ENCODE measurements at regions of chr2 and their contacts with region 1.

Region 1: DNA sequence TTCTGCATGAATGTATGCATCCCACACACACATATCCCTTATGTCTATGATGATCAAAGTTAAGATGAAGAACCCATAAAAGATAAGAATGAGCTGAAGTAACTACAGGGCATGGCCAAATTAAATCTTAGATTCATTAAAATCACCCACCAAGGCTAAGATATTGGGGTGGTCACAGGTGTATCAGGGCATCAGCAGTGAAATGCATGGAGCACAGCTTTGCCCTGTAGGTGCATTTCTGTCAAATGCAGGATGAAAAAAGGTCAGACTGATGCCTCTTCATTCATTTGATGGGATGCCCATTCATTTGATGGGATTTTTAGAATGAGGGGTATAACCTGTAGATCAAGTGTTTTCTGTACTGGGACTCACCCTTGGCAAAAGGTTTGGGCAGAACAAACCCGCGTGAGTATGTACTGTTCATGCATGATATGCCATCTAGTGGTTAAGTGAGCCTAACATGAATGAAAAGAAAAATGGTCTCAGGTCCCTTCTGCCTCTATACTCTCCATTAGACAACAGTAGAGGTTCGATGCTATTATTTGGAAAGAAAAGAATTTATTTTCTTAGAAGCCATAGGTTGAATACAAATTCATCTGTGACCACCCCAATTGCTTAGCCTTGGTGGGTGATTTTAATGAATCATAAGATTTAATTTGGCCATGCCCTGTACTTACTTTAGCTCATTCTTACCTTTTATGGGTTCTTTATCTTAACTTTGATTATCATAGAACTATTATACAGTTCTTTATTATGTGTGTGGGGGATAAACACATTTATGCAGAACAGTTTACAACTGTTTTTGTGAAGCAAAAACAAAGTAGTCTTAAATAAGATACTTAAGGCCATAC is 43.2 kb upstream of the NOSTRIN start:
- DNase-seq: peak in 7 of 9 donors; percentile 12 to 53 (median 45)
- ATAC-seq: peak; percentile 87
- H3K4me3 ChIP-seq: no peak overlapping the region
- H3K4me3 Mint-ChIP-seq: no peak overlapping the region
- H3K27ac ChIP-seq: no peak overlapping the region
- H3K27ac Mint-ChIP-seq: peak overlapping the region in 1 of 9 donors; percentile 14
- H3K4me1 ChIP-seq: peaks cover 21 to 42% of the 10 kb centered on the region in 2 donors
- H3K4me1 Mint-ChIP-seq: peaks cover 21 to 52% (median 48%) of the 10 kb centered on the region in 7 donors
- H3K27me3 ChIP-seq: no peaks in the 10 kb centered on the region
- H3K27me3 Mint-ChIP-seq: no peaks in the 10 kb centered on the region

Region 2: GRCh38 chr2:168687314-168687713 is 71.9 kb before region 1 on chr2:
- CTCF ChIA-PET with region 1: interaction called, 4 read pairs
- POLR2A ChIA-PET with region 1: no interaction called
- intact Hi-C with region 1: loop called in 1 of 2 experiments (anchors 1 kb)
- DNase-seq: peak in 7 of 9 donors; percentile 12 to 50 (median 31)
- ATAC-seq: no peak
- H3K4me3 ChIP-seq: no peak overlapping the region
- H3K4me3 Mint-ChIP-seq: no peak overlapping the region
- H3K27ac ChIP-seq: no peak overlapping the region
- H3K27ac Mint-ChIP-seq: no peak overlapping the region
- H3K4me1 ChIP-seq: no peaks in the 10 kb centered on the region
- H3K4me1 Mint-ChIP-seq: peaks cover 3 to 28% (median 9%) of the 10 kb centered on the region in 7 donors
- H3K27me3 ChIP-seq: no peaks in the 10 kb centered on the region
- H3K27me3 Mint-ChIP-seq: no peaks in the 10 kb centered on the region

Region 3: GRCh38 chr2:168705534-168706470 is 53.4 kb before region 1 on chr2:
- CTCF ChIA-PET with region 1: interaction called, 4 read pairs
- POLR2A ChIA-PET with region 1: no interaction called
- intact Hi-C with region 1: loop called in 1 of 2 experiments (anchors 1 kb)
- DNase-seq: peak in 4 of 9 donors; percentile 4 to 31 (median 16)
- ATAC-seq: no peak
- H3K4me3 ChIP-seq: no peak overlapping the region
- H3K4me3 Mint-ChIP-seq: no peak overlapping the region
- H3K27ac ChIP-seq: no peak overlapping the region
- H3K27ac Mint-ChIP-seq: peak overlapping the region in 2 of 9 donors; percentile 3 to 42
- H3K4me1 ChIP-seq: no peaks in the 10 kb centered on the region
- H3K4me1 Mint-ChIP-seq: peaks cover 0 to 20% (median 13%) of the 10 kb centered on the region in 7 donors
- H3K27me3 ChIP-seq: no peaks in the 10 kb centered on the region
- H3K27me3 Mint-ChIP-seq: no peaks in the 10 kb centered on the region

Region 4: GRCh38 chr2:168712049-168712448 is 47.1 kb before region 1 on chr2:
- CTCF ChIA-PET with region 1: no interaction called
- POLR2A ChIA-PET with region 1: no interaction called
- intact Hi-C with region 1: loop called in 1 of 2 experiments (anchors 2 kb)
- DNase-seq: no peak
- ATAC-seq: peak; percentile 29
- H3K4me3 ChIP-seq: no peak overlapping the region
- H3K4me3 Mint-ChIP-seq: no peak overlapping the region
- H3K27ac ChIP-seq: no peak overlapping the region
- H3K27ac Mint-ChIP-seq: peak overlapping the region in 2 of 9 donors; percentile 52 to 61
- H3K4me1 ChIP-seq: no peaks in the 10 kb centered on the region
- H3K4me1 Mint-ChIP-seq: peaks cover under 1 to 28% (median 17%) of the 10 kb centered on the region in 7 donors
- H3K27me3 ChIP-seq: no peaks in the 10 kb centered on the region
- H3K27me3 Mint-ChIP-seq: no peaks in the 10 kb centered on the region

Region 5: DNA sequence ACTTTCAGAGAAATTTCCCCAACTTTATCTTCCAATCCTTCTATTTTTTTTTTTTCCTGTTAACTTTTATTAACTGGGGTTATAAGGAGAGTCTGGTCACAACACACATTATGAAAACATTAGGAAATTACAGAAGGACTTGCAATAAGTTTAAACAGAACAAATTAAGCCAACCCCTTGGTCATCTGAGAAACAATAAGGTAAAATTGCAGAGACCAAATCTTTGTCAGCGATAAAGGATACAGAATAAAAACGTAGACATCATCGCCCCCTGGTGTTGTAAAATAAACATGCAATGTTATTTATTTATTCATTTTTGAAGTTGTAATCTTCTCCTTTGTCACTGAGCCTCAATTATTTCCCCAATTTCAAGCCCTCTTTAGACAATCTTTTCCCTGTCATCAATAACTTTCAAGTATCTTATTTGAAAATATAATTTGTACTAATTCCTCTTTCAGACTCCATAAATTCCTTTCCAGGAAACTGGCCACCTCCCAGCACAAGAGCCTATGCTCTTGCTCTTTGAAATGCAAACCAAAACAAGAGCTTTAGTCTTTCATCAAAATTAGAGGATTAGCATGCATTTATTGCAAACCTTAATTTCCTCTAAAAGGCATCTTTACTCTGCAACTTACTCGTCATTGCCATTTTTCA is 161.4 kb after region 1 on chr2:
- CTCF ChIA-PET with region 1: no interaction called
- POLR2A ChIA-PET with region 1: no interaction called
- intact Hi-C with region 1: loop called in 1 of 2 experiments (anchors 1 kb)
- DNase-seq: peak in 6 of 9 donors; percentile 15 to 51 (median 42)
- ATAC-seq: no peak
- H3K4me3 ChIP-seq: no peak overlapping the region
- H3K4me3 Mint-ChIP-seq: no peak overlapping the region
- H3K27ac ChIP-seq: no peak overlapping the region
- H3K27ac Mint-ChIP-seq: peak overlapping the region in 1 of 9 donors; percentile 8
- H3K4me1 ChIP-seq: no peaks in the 10 kb centered on the region
- H3K4me1 Mint-ChIP-seq: peaks cover 0 to 8% (median 0%) of the 10 kb centered on the region in 7 donors
- H3K27me3 ChIP-seq: no peaks in the 10 kb centered on the region
- H3K27me3 Mint-ChIP-seq: peaks cover 18 to 58% (median 25%) of the 10 kb centered on the region in 5 donors